ENCODE measurements at regions of chr11 and their contacts with region 1.

Region 1: GRCh38 chr11:129950101-129951091 is 52.2 kb downstream of the PRDM10 start:
- DNase-seq: no peak
- H3K4me3 ChIP-seq: no peak overlapping the region
- H3K27ac ChIP-seq: no peak overlapping the region
- H3K4me1 ChIP-seq: no peaks in the 10 kb centered on the region
- H3K27me3 ChIP-seq: no peaks in the 10 kb centered on the region
- CTCF ChIP-seq: no peak

Region 2: DNA sequence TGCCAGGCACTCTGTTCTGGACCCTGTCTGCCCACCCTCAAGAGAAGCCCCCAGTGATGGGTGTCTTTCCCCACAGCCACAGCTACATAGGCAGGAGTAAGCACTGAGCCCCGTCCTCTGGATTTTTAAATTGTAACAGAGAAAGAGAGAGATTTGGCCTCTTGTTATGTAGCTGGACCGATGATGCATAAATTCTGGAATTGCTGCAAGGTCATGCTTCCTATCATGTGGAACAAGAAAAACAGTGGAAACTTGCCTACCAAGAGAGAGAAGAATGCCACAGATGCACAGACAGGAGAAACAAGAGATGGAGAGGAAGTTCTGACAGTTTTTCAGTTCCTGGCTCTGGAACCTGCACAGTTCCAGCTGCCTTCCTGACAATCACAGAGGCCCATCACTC is 1513.3 kb before region 1 on chr11:
- CTCF ChIA-PET with region 1: no interaction called
- POLR2A ChIA-PET with region 1: no interaction called
- intact Hi-C with region 1: no loop called
- DNase-seq: no peak
- H3K4me3 ChIP-seq: no peak overlapping the region
- H3K27ac ChIP-seq: no peak overlapping the region
- H3K4me1 ChIP-seq: no peaks in the 10 kb centered on the region
- H3K27me3 ChIP-seq: no peaks in the 10 kb centered on the region
- CTCF ChIP-seq: no peak

Region 3: GRCh38 chr11:130206141-130206540 is 255.7 kb after region 1 on chr11:
- CTCF ChIA-PET with region 1: interaction called, 11 read pairs
- POLR2A ChIA-PET with region 1: no interaction called
- intact Hi-C with region 1: no loop called
- DNase-seq: no peak
- H3K4me3 ChIP-seq: no peak overlapping the region
- H3K27ac ChIP-seq: no peak overlapping the region
- H3K4me1 ChIP-seq: no peaks in the 10 kb centered on the region
- H3K27me3 ChIP-seq: no peaks in the 10 kb centered on the region
- CTCF ChIP-seq: no peak

Region 4: GRCh38 chr11:130243816-130244215 is 293.4 kb after region 1 on chr11:
- CTCF ChIA-PET with region 1: no interaction called
- POLR2A ChIA-PET with region 1: no interaction called
- intact Hi-C with region 1: no loop called
- DNase-seq: no peak
- H3K4me3 ChIP-seq: no peak overlapping the region
- H3K27ac ChIP-seq: no peak overlapping the region
- H3K4me1 ChIP-seq: no peaks in the 10 kb centered on the region
- H3K27me3 ChIP-seq: no peaks in the 10 kb centered on the region
- CTCF ChIP-seq: no peak